Ovary (tissue), 10 donors: ENCODE measurements at regions of chr11 and their contacts with region 1.

Region 1: GRCh38 chr11:75142714-75143419 is 8.0 kb upstream of the SLCO2B1 start:
- DNase-seq: peak in 4 of 5 donors; percentile 25 to 61 (median 43)
- H3K4me3 ChIP-seq: no peak overlapping the region
- H3K27ac ChIP-seq: no peak overlapping the region
- H3K4me1 ChIP-seq: no peaks in the 10 kb centered on the region
- H3K27me3 ChIP-seq: no peaks in the 10 kb centered on the region
- CTCF ChIP-seq: no peak
- EP300 ChIP-seq: no peak
- POLR2A ChIP-seq: no peak

Region 2: GRCh38 chr11:75040167-75040770 is 102.6 kb before region 1 on chr11:
- intact Hi-C with region 1: no loop called
- DNase-seq: no peak
- H3K4me3 ChIP-seq: no peak overlapping the region
- H3K27ac ChIP-seq: no peak overlapping the region
- H3K4me1 ChIP-seq: no peaks in the 10 kb centered on the region
- H3K27me3 ChIP-seq: no peaks in the 10 kb centered on the region
- CTCF ChIP-seq: no peak
- EP300 ChIP-seq: no peak
- POLR2A ChIP-seq: no peak

Region 3: GRCh38 chr11:75204685-75205563 is 62.1 kb after region 1 on chr11:
- intact Hi-C with region 1: loop called in 1 of 4 experiments (anchors 5 kb)
- DNase-seq: peak; percentile 52 to 86 (median 61)
- H3K4me3 ChIP-seq: no peak overlapping the region
- H3K27ac ChIP-seq: no peak overlapping the region
- H3K4me1 ChIP-seq: no peaks in the 10 kb centered on the region
- H3K27me3 ChIP-seq: no peaks in the 10 kb centered on the region
- CTCF ChIP-seq: peak in 2 of 3 donors; percentile 32 to 58
- EP300 ChIP-seq: no peak
- POLR2A ChIP-seq: no peak

Region 4: GRCh38 chr11:75241036-75241905 is 98.4 kb after region 1 on chr11:
- intact Hi-C with region 1: loop called (anchors 5 kb)
- DNase-seq: peak; percentile 68 to 93 (median 76)
- H3K4me3 ChIP-seq: peak overlapping the region; percentile 40
- H3K27ac ChIP-seq: no peak overlapping the region
- H3K4me1 ChIP-seq: peaks cover 4% of the 10 kb centered on the region
- H3K27me3 ChIP-seq: no peaks in the 10 kb centered on the region
- CTCF ChIP-seq: peak; percentile 37 to 97 (median 93)
- EP300 ChIP-seq: no peak
- POLR2A ChIP-seq: peak; percentile 10

Region 5: GRCh38 chr11:75248690-75249268 is 105.9 kb after region 1 on chr11:
- intact Hi-C with region 1: loop called (anchors 5 kb)
- DNase-seq: peak; percentile 80 to 90 (median 89)
- H3K4me3 ChIP-seq: no peak overlapping the region
- H3K27ac ChIP-seq: no peak overlapping the region
- H3K4me1 ChIP-seq: no peaks in the 10 kb centered on the region
- H3K27me3 ChIP-seq: no peaks in the 10 kb centered on the region
- CTCF ChIP-seq: peak; percentile 87 to 96 (median 91)
- EP300 ChIP-seq: no peak
- POLR2A ChIP-seq: no peak